ENCODE measurements at regions of chr12 and their contacts with region 1.

Region 1: DNA sequence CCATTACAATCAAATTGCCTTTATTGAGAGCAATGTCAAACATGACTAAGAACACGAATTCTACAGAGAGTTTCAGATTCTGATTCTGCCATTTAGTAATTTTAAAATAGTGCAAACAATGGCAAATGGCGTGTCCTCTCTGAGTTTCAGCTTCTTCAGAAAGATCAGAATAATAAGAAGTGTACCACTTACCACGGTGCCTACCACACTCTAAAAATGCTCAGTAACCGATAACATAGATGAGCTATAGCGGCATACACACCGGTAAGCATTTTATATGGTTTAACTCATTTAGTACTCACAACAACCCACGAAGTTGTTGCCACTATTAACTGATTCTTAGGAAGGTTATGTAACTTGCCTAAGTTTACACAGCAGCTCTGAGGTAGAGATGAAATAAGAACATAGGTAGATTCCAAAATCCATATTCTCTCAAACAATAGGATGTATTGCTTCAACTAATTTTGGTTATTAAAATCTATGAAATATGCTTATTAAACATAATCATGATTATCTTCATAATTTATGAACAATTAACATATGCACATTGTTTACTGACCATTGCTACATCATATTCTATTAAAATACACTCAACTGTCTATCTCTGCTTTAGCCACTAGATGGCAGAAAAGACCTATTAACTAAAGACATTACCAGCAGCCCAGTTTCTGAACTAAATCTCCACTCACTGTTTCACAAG is 38.3 kb downstream of the SLC6A15 start:
- DNase-seq: no peak
- ATAC-seq: peak; percentile 67

Region 2: DNA sequence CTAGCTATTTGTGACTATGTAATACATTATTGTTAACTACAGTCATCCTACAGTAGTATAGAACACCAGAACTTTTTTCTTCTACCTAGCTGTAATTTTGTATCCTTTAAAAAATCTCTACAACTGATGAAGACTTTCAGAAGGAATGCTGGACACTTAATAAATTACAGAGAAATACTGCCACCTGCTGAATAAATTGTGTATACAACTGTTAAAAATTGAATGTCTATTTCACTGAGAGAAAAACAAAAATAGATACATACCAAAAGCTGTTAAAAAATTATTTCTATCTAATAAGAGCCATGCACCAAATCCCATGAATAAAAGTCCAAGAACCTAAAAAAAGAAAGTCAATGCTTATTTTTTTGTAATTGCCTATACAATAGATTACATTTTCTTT is 155.2 kb after region 1 on chr12:
- intact Hi-C with region 1: loop called in 1 of 2 experiments (anchors 2 kb)
- DNase-seq: no peak
- ATAC-seq: no peak

Region 3: GRCh38 chr12:85057370-85057963 is 183.2 kb after region 1 on chr12:
- intact Hi-C with region 1: loop called in 1 of 2 experiments (anchors 10 kb)
- DNase-seq: peak in 1 of 2 donors; percentile 11
- ATAC-seq: peak; percentile 46